ENCODE measurements at regions of chr9 and their contacts with region 1.

Region 1: DNA sequence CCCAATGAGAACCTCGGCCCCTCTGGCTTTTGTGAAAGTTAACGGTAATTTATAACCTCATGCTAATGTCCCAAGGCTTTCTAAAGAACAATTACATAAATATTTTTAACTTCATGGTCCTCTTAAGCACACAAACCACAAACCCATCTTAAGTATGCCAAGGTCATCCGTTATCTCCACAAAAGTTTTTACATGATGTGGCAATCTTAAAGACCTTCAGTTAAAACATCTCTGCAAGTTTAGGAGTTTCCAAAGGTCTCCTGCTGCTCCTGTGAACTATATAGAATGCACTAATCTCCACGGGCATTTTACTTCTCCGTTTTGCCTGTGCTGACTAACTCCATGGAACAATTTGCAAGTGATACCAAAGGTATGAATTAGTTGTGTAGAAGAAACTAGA is 228.2 kb downstream of the TLE1 start:
- DNase-seq: no peak
- ATAC-seq: no peak
- H3K4me3 ChIP-seq: no peak overlapping the region
- H3K4me3 Mint-ChIP-seq: no peak overlapping the region
- H3K27ac ChIP-seq: no peak overlapping the region
- H3K27ac Mint-ChIP-seq: no peak overlapping the region
- H3K4me1 ChIP-seq: no peaks in the 10 kb centered on the region
- H3K4me1 Mint-ChIP-seq: no peaks in the 10 kb centered on the region
- H3K27me3 ChIP-seq: no peaks in the 10 kb centered on the region
- H3K27me3 Mint-ChIP-seq: peaks cover 2% of the 10 kb centered on the region
- CTCF ChIP-seq: no peak

Region 2: GRCh38 chr9:81394881-81395675 is 66.1 kb before region 1 on chr9:
- CTCF ChIA-PET with region 1: no interaction called
- POLR2A ChIA-PET with region 1: no interaction called
- intact Hi-C with region 1: loop called in 1 of 2 experiments (anchors 2 kb)
- DNase-seq: no peak
- ATAC-seq: no peak
- H3K4me3 ChIP-seq: no peak overlapping the region
- H3K4me3 Mint-ChIP-seq: no peak overlapping the region
- H3K27ac ChIP-seq: no peak overlapping the region
- H3K27ac Mint-ChIP-seq: no peak overlapping the region
- H3K4me1 ChIP-seq: no peaks in the 10 kb centered on the region
- H3K4me1 Mint-ChIP-seq: no peaks in the 10 kb centered on the region
- H3K27me3 ChIP-seq: no peaks in the 10 kb centered on the region
- H3K27me3 Mint-ChIP-seq: no peaks in the 10 kb centered on the region
- CTCF ChIP-seq: no peak

Measured in CD8-positive, alpha-beta T cell (primary cell).